Sciatic nerve (tissue), 2 donors: ENCODE measurements at regions of chr4 and their contacts with region 1.

Region 1: GRCh38 chr4:111854494-111855087 is 290.7 kb upstream of the FAM241A start:
- DNase-seq: no peak
- ATAC-seq: no peak

Region 2: DNA sequence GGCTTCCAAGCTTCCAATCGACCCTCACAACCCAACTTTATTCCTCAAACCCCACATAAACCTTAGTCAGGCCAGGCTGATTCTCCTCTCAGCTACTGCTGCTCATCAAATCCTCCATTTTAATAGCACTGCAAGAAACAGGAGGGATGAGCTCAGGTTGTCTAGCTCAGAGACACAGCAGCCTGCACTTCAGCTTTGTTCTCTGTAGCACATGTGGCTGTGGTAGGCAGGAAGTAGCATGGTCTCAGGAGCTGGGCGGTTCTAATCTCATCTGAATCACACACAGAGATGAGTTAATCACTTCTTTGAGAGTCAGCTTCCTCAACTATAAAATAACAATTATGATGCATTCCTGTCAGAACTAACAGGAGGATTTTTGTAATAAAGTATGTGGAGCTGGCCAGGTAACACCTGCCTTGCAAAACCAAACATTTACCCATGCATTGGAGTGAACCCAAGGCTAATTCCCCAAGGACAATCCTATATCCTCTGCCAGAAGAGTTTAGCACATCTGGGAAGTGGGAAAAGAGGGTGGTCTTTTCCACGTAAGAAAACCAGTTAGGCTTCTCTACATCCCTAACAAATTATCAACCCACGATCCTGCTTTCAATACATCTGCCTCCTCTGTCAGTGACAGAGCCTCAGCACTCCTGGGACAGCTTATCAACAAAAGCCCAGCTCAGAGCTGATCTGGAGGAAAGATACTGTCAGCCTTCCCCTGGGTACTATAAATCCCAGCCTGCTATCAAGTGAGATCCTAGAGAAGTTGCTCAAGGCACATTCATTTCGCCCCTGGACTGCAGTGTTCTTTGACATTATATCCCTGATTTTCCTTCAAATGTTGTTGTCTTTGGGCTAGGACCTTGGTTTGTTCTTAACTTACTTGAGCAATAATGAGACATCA is 1689.0 kb before region 1 on chr4:
- intact Hi-C with region 1: no loop called
- DNase-seq: no peak
- ATAC-seq: no peak

Region 3: DNA sequence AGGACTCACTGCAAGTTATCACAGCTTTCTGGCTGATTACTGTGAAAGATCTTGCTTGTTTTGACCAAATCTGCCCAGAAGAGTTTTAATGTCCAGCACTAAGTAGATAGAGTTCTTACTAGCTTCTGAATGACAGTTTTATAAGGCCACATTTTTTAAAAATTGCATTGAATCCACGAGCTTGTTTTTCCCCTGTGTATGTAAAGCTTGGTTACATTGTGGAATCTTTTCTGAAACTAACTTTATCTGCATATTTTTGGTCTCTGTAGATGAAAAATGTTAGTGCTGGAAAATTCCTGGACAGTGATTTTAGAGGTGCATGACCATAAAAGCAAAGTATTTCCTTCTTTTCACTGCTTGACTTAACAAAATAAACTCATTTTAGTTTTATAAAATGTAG is 359.6 kb before region 1 on chr4:
- intact Hi-C with region 1: no loop called
- DNase-seq: no peak
- ATAC-seq: no peak

Region 4: GRCh38 chr4:111641955-111642579 is 212.5 kb before region 1 on chr4:
- intact Hi-C with region 1: loop called (anchors 10 kb)
- DNase-seq: peak; percentile 59
- ATAC-seq: peak; percentile 86

Region 5: DNA sequence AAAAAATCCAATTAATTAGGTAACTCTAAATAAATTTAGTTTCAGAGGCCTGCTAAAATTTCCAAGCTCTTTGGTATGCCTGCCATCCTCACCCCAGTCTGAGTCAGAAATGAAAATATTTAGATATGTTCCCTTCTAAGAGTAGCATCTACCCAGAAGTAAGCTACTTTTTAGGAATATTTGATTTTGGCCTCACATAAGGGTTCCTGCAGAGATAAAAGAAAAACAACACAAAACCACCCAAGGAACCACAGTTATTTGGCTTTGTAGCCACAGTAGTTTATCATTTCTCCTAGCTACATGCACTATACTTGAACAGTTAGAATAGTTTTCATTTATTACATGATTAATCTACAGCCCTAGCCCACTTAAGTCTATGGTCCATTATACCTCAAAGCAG is 98.1 kb after region 1 on chr4:
- intact Hi-C with region 1: no loop called
- DNase-seq: no peak
- ATAC-seq: no peak